ENCODE measurements at regions of chr18 and their contacts with region 1.

Region 1: GRCh38 chr18:47930931-47931717 is 665 bp upstream of the SMAD2 start:
- DNase-seq: peak; percentile 97
- ATAC-seq: peak; percentile 79
- H3K4me3 Mint-ChIP-seq: peak overlapping the region; percentile 77
- H3K27ac Mint-ChIP-seq: peak overlapping the region; percentile 91
- H3K4me1 Mint-ChIP-seq: peaks cover 36% of the 10 kb centered on the region
- H3K27me3 Mint-ChIP-seq: no peaks in the 10 kb centered on the region

Region 2: DNA sequence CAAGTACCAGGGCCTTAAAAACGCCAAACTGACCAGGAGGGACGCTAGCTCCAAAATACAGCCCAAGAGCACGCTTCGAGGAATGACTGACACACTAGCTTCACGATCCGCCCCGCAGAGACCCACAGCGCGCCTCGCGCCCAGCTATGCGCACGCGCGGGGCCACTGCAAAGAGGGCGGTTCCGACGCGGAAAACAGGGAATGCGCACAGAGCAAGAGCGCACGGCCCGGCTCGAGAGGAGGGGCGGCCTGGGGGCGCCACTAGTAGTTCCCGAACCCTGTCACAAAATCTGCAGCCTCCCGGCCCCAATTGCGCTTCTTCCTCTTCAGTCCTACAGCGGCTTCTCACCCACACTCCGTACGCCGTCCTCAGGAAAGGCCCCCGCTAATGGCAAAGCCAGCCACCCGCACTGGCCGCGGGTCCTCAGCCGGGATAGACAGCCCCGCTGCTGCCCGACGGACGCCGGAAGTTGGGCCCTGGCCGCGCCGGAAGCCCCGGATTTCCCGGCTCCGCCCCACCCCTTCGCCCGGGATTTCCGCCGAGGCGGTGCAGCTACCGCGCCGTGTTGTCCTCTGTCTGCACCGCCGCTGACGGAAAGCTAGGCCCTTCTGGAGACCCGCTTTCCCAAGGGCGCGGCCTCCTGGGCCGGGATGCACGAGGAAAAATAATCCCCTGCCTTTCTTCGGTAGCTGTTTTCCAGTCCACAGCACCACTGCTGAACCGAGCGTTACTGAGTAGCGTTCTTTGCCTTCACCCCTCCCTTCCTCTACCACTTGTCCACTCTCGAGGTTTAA is 780.9 kb before region 1 on chr18 and contains the start of gene HDHD2:
- CTCF ChIA-PET with region 1: no interaction called
- POLR2A ChIA-PET with region 1: no interaction called
- intact Hi-C with region 1: loop called in 1 of 2 experiments (anchors 1 kb)
- DNase-seq: peak; percentile 88
- ATAC-seq: peak; percentile 89
- H3K4me3 Mint-ChIP-seq: peak within 1 kb of the TSS; percentile 98
- H3K27ac Mint-ChIP-seq: peak within 1 kb of the TSS; percentile 98
- H3K4me1 Mint-ChIP-seq: peaks cover 41% of the 10 kb centered on the region
- H3K27me3 Mint-ChIP-seq: no peaks in the 10 kb centered on the region
- total RNA-seq, gene HDHD2: 27.7 to 28.9 TPM

Region 3: GRCh38 chr18:47883771-47884413 is 47.2 kb before region 1 on chr18:
- CTCF ChIA-PET with region 1: no interaction called
- POLR2A ChIA-PET with region 1: no interaction called
- intact Hi-C with region 1: loop called in 1 of 2 experiments (anchors 5 kb)
- DNase-seq: peak; percentile 72
- ATAC-seq: peak; percentile 97
- H3K4me3 Mint-ChIP-seq: no peak overlapping the region
- H3K27ac Mint-ChIP-seq: peak overlapping the region; percentile 84
- H3K4me1 Mint-ChIP-seq: peaks cover 47% of the 10 kb centered on the region
- H3K27me3 Mint-ChIP-seq: no peaks in the 10 kb centered on the region

Region 4: DNA sequence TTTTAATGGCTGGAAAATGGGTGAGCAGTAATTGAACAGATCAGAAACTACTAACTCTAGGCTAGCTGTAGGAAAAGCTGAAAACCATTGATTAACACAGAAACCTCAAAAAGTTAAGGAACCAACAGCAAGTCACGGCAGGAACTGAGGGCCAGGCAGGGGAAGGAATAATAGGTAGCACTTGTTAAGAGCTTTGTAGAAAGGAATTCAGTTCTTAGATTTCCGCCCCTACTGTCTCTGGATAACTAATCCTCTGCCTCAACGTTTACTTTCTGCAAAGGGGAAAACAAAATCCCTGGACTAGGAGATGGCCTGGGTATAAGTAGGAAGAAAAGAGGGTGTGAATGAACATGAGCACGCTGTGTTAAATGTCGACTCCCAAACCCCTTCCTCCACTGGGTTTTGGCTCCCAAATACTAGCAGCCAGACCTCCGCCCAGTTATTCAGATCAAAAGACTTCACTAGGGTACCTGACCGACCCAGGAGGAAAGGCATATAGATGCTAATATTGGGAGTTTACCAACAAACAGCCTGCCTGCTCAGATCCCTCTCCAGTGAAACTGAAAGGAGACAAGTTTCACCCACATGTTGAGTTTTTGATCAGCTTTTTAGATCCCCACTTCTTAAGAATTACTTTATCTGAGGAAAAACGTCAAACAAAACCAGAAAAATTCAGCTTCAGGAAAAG is 13.1 kb before region 1 on chr18:
- CTCF ChIA-PET with region 1: interaction called, 5 read pairs
- POLR2A ChIA-PET with region 1: interaction called, 17 read pairs
- intact Hi-C with region 1: loop called in 1 of 2 experiments (anchors 1 kb)
- DNase-seq: peak; percentile 17
- ATAC-seq: peak; percentile 61
- H3K4me3 Mint-ChIP-seq: peak overlapping the region; percentile 71
- H3K27ac Mint-ChIP-seq: peak overlapping the region; percentile 98
- H3K4me1 Mint-ChIP-seq: peaks cover 96% of the 10 kb centered on the region
- H3K27me3 Mint-ChIP-seq: no peaks in the 10 kb centered on the region

Region 5: DNA sequence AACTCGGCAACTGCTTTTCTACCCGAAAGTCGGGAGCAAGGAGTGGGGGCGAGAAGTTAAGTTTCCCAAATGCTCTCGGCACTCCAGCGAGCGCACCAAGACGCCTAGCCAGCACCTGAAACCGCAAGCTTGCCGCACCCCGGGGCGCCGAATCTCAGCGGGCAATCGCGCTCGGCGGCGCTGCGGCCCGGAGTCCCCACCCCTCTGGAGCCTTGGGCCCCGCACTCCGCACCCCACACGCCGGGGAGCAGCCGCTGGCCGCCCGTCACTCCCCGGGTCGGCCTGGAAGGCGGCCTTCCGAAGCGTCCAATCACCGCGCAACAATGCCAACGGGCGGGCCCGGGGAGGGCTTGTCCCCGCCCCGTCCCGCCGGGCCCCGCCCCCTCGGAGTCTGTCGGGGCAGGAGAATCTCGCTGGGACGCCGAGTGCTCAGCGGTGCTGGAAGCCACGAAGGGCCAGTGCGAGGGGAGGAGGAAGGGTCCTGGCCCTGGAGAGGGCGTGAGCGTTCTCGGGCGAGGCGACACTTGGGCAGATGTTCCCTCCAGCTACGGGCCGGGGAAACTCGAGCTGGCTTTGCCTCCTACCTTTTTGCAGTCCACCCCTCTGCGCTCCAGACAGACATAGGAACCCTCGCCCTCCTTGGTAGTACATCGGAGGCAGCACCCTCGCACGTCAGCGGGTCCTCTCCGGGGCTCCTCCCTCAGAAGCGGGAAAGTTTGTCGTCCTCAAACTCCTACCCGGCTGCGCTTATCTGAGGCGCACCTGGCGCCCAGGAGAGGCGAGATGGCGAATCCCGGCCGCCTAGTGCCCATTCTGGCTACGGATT is 479.2 kb after region 1 on chr18:
- CTCF ChIA-PET with region 1: no interaction called
- POLR2A ChIA-PET with region 1: no interaction called
- intact Hi-C with region 1: loop called in 1 of 2 experiments (anchors 1 kb)
- DNase-seq: peak; percentile 88
- ATAC-seq: peak; percentile 97
- H3K4me3 Mint-ChIP-seq: peak overlapping the region; percentile 48
- H3K27ac Mint-ChIP-seq: no peak overlapping the region
- H3K4me1 Mint-ChIP-seq: peaks cover 12% of the 10 kb centered on the region
- H3K27me3 Mint-ChIP-seq: peaks cover 67% of the 10 kb centered on the region

Region 6: DNA sequence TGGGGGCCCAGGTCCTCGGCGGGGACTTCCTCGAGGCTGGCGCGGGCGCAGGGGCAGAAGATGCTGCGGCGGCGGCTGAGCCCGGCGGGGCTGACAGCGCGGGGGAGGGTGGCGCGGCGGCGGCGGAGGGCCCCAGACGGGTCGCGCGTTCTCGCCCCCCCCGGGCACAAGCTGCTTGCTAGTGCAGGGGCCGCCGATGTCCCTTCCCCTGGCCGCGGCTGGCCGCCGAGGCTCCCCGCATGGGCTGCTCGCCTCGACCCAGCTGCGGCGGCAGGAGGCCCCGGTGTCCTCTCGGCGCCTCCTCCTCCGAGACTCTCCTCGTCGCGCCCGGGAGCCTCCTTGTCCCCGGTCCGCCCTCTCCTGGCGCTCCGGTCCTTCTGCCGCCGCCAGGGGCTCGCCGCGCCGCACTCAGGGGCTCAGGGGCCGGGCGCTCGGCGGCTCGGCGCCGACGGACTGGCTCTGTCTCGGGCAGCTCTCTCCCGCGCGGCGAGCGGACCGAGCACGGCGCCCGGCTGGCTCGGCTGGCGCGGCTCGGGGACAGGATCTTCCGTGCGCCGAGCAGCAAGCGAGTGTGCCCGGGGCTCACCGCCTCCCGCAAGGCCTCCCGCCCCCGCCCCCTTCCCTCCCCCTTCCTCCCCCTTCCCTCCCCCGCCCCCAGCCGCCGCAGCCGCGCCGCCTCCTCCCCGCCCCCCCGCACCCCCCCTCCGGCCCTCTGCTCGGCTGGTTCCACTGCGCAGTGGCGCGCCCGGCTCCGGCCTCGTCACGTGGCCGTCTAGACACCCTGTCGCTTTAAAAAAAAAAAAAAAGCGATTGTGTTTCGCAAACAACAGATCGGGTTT is 1020.5 kb after region 1 on chr18:
- CTCF ChIA-PET with region 1: no interaction called
- POLR2A ChIA-PET with region 1: no interaction called
- intact Hi-C with region 1: loop called in 1 of 2 experiments (anchors 10 kb)
- DNase-seq: peak; percentile 84
- ATAC-seq: peak; percentile 42
- H3K4me3 Mint-ChIP-seq: peak overlapping the region; percentile 97
- H3K27ac Mint-ChIP-seq: peak overlapping the region; percentile 88
- H3K4me1 Mint-ChIP-seq: peaks cover 41% of the 10 kb centered on the region
- H3K27me3 Mint-ChIP-seq: no peaks in the 10 kb centered on the region

Measured in activated CD4-positive, alpha-beta T cell treated with anti-CD3 and anti-CD28 coated beads for 36 hours (primary cell).